Gastrocnemius medialis (tissue), 4 donors: ENCODE measurements at regions of chr13 and their contacts with region 1.

Region 1: GRCh38 chr13:44917589-44918325 is 71.5 kb downstream of the NUFIP1 start:
- DNase-seq: peak; percentile 91 to 95
- ATAC-seq: peak; percentile 63 to 65
- H3K4me3 ChIP-seq: peak overlapping the region; percentile 50 to 59 (median 58)
- H3K27ac ChIP-seq: peak overlapping the region; percentile 90 to 98 (median 95)
- H3K4me1 ChIP-seq: peaks cover 27 to 36% of the 10 kb centered on the region in 2 donors
- H3K27me3 ChIP-seq: no peaks in the 10 kb centered on the region
- CTCF ChIP-seq: peak; percentile 45 to 71 (median 59)
- POLR2A ChIP-seq: peak; percentile 70 to 83

Region 2: DNA sequence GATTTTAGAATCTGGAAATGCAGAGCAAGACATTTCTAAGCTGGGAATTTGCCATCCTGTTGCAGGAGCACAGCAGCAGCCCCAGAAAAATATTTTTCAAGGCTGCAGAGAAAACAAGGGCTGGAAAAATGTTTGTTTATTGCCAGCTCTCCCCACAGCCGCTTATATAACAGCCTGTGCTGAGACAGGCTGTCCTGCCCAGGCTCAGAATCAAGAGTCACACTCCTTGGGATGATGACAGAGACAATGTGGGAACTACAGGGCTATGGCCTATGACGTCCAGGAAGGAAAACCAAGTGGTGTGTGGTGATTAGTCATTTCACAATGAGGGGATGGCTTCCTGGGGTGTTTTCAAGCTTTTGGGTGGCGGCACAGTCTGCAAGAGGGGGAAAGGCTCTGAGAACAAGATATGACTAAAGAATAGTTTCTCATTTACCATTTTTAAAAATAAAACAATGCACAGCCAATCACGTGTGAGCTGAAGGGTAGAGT is 680.4 kb before region 1 on chr13:
- in situ Hi-C with region 1: no loop called
- intact Hi-C with region 1: loop called (anchors 10 kb)
- DNase-seq: peak; percentile 86 to 89
- ATAC-seq: peak; percentile 87 to 90
- H3K4me3 ChIP-seq: no peak overlapping the region
- H3K27ac ChIP-seq: peak overlapping the region; percentile 91 to 94 (median 93)
- H3K4me1 ChIP-seq: peaks cover 47 to 51% of the 10 kb centered on the region in 2 donors
- H3K27me3 ChIP-seq: no peaks in the 10 kb centered on the region
- CTCF ChIP-seq: no peak
- POLR2A ChIP-seq: peak; percentile 39 to 60

Region 3: GRCh38 chr13:44300895-44301638 is 616.7 kb before region 1 on chr13:
- in situ Hi-C with region 1: no loop called
- intact Hi-C with region 1: loop called (anchors 10 kb)
- DNase-seq: peak; percentile 84 to 88
- ATAC-seq: peak; percentile 93 to 94
- H3K4me3 ChIP-seq: no peak overlapping the region
- H3K27ac ChIP-seq: peak overlapping the region; percentile 71 to 89 (median 86)
- H3K4me1 ChIP-seq: peaks cover 70 to 79% of the 10 kb centered on the region in 2 donors
- H3K27me3 ChIP-seq: no peaks in the 10 kb centered on the region
- CTCF ChIP-seq: peak in 1 of 5 experiments; percentile 37
- POLR2A ChIP-seq: peak in 1 of 2 donors; percentile 25

Region 4: DNA sequence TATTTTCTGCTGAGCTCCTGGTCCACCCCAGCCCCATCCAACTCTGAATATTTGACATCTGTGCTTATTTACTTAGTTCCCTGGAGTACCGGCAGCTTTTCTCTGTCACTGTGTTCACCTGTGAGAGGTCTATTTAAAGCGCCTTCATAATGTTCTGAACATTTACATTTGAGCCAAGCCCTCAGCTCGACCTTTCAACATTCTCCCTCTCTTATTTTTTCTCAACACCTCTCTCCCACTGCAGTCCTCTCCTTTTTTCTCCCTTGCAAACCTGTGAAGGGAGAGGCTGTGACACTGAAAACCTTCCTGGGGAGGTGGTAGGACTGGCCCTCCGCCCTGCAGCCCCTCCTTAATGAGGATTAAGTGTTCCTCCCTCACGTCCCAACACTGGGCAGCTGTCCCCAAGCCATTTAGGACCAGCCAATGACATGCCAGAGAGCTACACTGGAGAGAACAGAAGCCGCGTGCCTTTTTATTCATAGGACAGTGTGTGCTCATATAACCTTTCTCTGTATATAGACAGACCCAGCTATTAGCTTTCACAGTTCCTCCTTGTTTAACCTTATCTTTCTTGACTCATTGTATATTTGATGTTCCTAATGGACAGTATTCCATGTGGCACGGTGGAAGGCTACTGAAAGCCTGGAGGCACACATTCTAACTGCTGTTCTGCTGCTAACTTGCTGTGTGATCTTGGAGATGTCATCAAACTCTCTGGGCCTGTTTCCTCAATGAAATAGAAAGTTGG is 63.3 kb before region 1 on chr13:
- in situ Hi-C with region 1: loop called in 1 of 4 experiments (anchors 5 kb)
- intact Hi-C with region 1: loop called (anchors 1 kb)
- DNase-seq: peak; percentile 96 to 99
- ATAC-seq: peak; percentile 88 to 92
- H3K4me3 ChIP-seq: peak overlapping the region in 2 of 4 donors; percentile 9 to 21
- H3K27ac ChIP-seq: peak overlapping the region; percentile 88 to 95 (median 93)
- H3K4me1 ChIP-seq: peaks cover 34 to 38% of the 10 kb centered on the region in 2 donors
- H3K27me3 ChIP-seq: no peaks in the 10 kb centered on the region
- CTCF ChIP-seq: no peak
- POLR2A ChIP-seq: peak; percentile 46 to 61

Region 5: DNA sequence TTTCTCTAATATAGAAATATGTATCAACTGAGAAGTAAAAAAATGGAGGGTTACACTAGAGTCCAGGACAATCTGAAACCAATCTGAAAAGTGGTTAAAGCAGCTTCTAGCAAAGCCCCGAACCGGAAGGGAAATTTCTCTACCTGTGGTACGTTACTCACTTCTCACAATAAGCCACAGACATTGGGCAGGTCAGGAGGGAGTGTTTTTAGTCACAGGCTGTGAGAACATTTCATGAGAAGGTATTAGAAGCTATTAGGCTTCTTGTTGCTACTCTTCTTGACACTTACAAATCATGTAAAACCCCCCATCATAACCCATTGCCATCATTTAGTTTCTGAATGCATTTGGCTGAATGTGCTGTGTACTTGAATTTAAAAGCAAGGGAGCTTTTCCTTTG is 49.4 kb before region 1 on chr13:
- in situ Hi-C with region 1: loop called in 1 of 4 experiments (anchors 5 kb)
- intact Hi-C with region 1: loop called (anchors 1 kb)
- DNase-seq: no peak
- ATAC-seq: no peak
- H3K4me3 ChIP-seq: no peak overlapping the region
- H3K27ac ChIP-seq: peak overlapping the region; percentile 86 to 95 (median 94)
- H3K4me1 ChIP-seq: peaks cover 32 to 34% of the 10 kb centered on the region in 2 donors
- H3K27me3 ChIP-seq: no peaks in the 10 kb centered on the region
- CTCF ChIP-seq: no peak
- POLR2A ChIP-seq: no peak

Region 6: GRCh38 chr13:44904967-44905366 is 12.8 kb before region 1 on chr13:
- in situ Hi-C with region 1: no loop called
- intact Hi-C with region 1: loop called (anchors 1 kb)
- DNase-seq: peak; percentile 73 to 79
- ATAC-seq: peak; percentile 72 to 89
- H3K4me3 ChIP-seq: no peak overlapping the region
- H3K27ac ChIP-seq: peak overlapping the region; percentile 82 to 91 (median 86)
- H3K4me1 ChIP-seq: peaks cover 47 to 56% of the 10 kb centered on the region in 2 donors
- H3K27me3 ChIP-seq: no peaks in the 10 kb centered on the region
- CTCF ChIP-seq: no peak
- POLR2A ChIP-seq: no peak

Region 7: DNA sequence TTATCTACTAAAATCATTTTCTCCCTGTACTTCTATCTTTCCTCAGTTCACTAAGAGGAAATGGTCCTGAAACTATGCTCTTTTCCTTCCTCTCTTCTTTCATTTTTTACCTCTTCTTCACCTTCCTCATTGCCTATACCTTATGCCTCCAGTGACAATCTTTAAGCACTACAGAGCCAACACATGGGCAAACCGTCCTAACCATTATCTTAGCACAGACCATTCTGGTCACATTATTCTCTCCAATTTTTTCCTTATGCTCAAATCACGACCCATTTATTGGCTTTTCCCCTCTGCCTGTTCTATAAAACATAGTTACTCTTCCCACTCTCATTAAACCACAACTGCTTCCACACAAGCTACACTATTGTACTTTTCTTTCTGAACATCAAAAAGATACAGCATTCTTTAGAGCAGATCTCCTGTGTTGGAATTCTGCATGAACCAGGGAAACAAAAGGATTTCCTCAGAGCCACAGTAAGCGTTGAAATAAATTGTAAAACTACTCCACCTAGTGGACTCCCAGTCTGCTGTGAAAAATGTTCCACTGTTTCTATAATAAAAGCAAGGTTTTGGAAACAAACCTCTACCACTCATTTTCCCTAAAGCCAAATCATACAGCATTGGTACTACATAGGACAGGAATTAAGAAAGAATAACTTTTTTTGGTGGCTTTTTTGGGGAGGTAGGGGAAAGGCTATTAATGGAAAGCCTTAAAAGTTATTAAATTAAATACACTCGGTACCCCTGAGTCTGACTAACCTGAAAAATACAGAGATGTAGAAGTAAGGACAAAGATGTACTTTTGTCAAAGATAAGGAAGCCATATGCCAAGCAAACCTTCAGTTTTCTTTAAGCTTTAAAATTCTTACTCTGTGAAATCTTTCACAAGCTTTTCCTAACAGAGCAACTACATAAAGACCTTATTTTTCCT is 52.1 kb after region 1 on chr13:
- in situ Hi-C with region 1: no loop called
- intact Hi-C with region 1: loop called (anchors 1 kb)
- DNase-seq: no peak
- ATAC-seq: peak; percentile 64 to 69
- H3K4me3 ChIP-seq: no peak overlapping the region
- H3K27ac ChIP-seq: peak overlapping the region; percentile 60 to 81 (median 79)
- H3K4me1 ChIP-seq: peaks cover 37 to 51% of the 10 kb centered on the region in 2 donors
- H3K27me3 ChIP-seq: no peaks in the 10 kb centered on the region
- CTCF ChIP-seq: peak; percentile 78 to 92 (median 82)
- POLR2A ChIP-seq: no peak